HepG2 (cell line): ENCODE measurements at regions of chr6 and their contacts with region 1.

Region 1: GRCh38 chr6:43059168-43060033 is at the starts of genes KLC4 and MRPL2:
- DNase-seq: peak; percentile 99
- ATAC-seq: peak; percentile 82
- H3K4me3 ChIP-seq: peak within 1 kb of the TSS; percentile 74 to 99 (median 93)
- H3K27ac ChIP-seq: peak within 1 kb of the TSS; percentile 91
- H3K4me1 ChIP-seq: peaks cover 37% of the 10 kb centered on the region
- H3K27me3 ChIP-seq: no peaks in the 10 kb centered on the region; a peak in 1 of 5 replicates
- CTCF ChIP-seq: peak; percentile 11; the same call in 1 of the 2 replicates
- EP300 ChIP-seq: peak in 1 of 2 experiments; percentile 18; a peak in 1 of 4 replicates
- POLR2A ChIP-seq: peak in 1 of 2 experiments; percentile 93; a peak in 2 of 4 replicates
- RAD21 ChIP-seq: 0 out of 2 replicates have a peak, but pooled peaks have one; percentile 13
- total RNA-seq, gene KLC4: 45.4 and 45.8 TPM in 2 replicates
- total RNA-seq, gene MRPL2: 56.1 and 56.8 TPM in 2 replicates

Region 2: GRCh38 chr6:42901536-42901957 is 157.9 kb before region 1 on chr6:
- CTCF ChIA-PET with region 1: no interaction called
- POLR2A ChIA-PET with region 1: interaction called, 6 read pairs
- in situ Hi-C with region 1: no loop called
- intact Hi-C with region 1: loop called (anchors 1 kb)
- DNase-seq: peak; percentile 92
- ATAC-seq: peak; percentile 94
- H3K4me3 ChIP-seq: peak overlapping the region; percentile 48 to 71 (median 63)
- H3K27ac ChIP-seq: no peak overlapping the region
- H3K4me1 ChIP-seq: peaks cover 38% of the 10 kb centered on the region
- H3K27me3 ChIP-seq: no peaks in the 10 kb centered on the region
- CTCF ChIP-seq: peak; percentile 98
- EP300 ChIP-seq: 0 out of 4 replicates have a peak, but pooled peaks of 1 of the 2 experiments have one; percentile 16
- POLR2A ChIP-seq: no peak
- RAD21 ChIP-seq: peak; percentile 96

Region 3: DNA sequence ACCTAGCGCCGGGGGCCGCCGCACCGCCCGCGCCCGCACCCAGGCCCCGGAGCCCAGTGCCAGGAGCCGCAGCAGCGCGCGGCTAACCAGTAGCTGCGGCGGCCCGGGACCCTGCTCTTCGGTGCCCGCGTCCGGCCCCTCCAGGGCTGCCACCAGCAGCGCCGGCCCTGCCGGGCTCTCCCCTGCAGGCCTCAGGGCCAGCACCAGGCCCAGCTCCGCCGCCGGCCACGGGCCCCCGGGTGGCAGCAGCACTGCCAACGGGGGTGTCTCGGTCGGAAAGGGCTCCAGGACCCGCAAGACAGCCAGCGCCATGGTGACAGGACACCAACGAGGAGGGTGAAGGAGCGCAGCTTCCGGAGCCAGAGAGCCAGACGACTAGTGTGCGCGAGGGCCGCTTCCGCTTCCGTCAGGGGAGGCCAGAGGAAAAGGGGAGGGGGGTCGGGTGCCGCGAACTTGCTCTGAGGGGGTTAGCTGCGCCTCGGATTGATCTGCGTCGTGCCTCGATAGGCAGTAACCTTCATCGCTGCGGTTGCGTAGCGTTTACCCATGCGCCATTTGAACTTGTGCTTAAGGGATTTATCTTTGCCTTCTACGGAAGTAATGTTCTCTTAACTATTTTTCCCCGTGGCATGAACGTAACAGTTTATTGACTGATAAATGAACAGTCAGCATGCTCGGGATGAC is 80.4 kb before region 1 on chr6 and contains the start of gene PEX6:
- CTCF ChIA-PET with region 1: no interaction called
- POLR2A ChIA-PET with region 1: interaction called, 44 read pairs
- in situ Hi-C with region 1: no loop called
- intact Hi-C with region 1: no loop called
- DNase-seq: peak; percentile 90
- ATAC-seq: peak; percentile 91
- H3K4me3 ChIP-seq: peak within 1 kb of the TSS; percentile 79 to 96 (median 95)
- H3K27ac ChIP-seq: peak within 1 kb of the TSS; percentile 73
- H3K4me1 ChIP-seq: peaks cover 44% of the 10 kb centered on the region
- H3K27me3 ChIP-seq: no peaks in the 10 kb centered on the region; a peak in 1 of 5 replicates
- CTCF ChIP-seq: peak; percentile 33; the same call in 1 of the 2 replicates
- EP300 ChIP-seq: no peak; a peak in 1 of 4 replicates
- POLR2A ChIP-seq: peak; percentile 96
- RAD21 ChIP-seq: 0 out of 2 replicates have a peak, but pooled peaks have one; percentile 17
- total RNA-seq, gene PEX6: 3.6 and 5.1 TPM in 2 replicates

Region 4: GRCh38 chr6:43021270-43022047 is 37.9 kb before region 1 on chr6 and contains the start of gene RRP36:
- CTCF ChIA-PET with region 1: no interaction called
- POLR2A ChIA-PET with region 1: interaction called, 76 read pairs
- in situ Hi-C with region 1: no loop called
- intact Hi-C with region 1: no loop called
- DNase-seq: peak; percentile 74
- ATAC-seq: peak; percentile 96
- H3K4me3 ChIP-seq: peak within 1 kb of the TSS; percentile 100
- H3K27ac ChIP-seq: peak within 1 kb of the TSS; percentile 77
- H3K4me1 ChIP-seq: peaks cover 30% of the 10 kb centered on the region
- H3K27me3 ChIP-seq: peaks cover 0 to 3% of the 10 kb centered on the region in 2 experiments; a peak in 1 of 5 replicates
- CTCF ChIP-seq: 0 out of 2 replicates have a peak, but pooled peaks have one; percentile 10
- EP300 ChIP-seq: no peak
- POLR2A ChIP-seq: peak; percentile 83 to 87
- RAD21 ChIP-seq: peak; percentile 48; the same call in 1 of the 2 replicates
- total RNA-seq, gene RRP36: 144 and 184 TPM in 2 replicates

Region 5: GRCh38 chr6:43075670-43076463 is 16.5 kb after region 1 on chr6 and contains the start of gene PTK7:
- CTCF ChIA-PET with region 1: no interaction called
- POLR2A ChIA-PET with region 1: interaction called, 103 read pairs
- in situ Hi-C with region 1: no loop called
- intact Hi-C with region 1: loop called (anchors 2 kb)
- DNase-seq: peak; percentile 74
- ATAC-seq: peak; percentile 73
- H3K4me3 ChIP-seq: peak within 1 kb of the TSS; percentile 99 to 100 (median 100)
- H3K27ac ChIP-seq: peak within 1 kb of the TSS; percentile 84
- H3K4me1 ChIP-seq: peaks cover 42% of the 10 kb centered on the region
- H3K27me3 ChIP-seq: no peaks in the 10 kb centered on the region; a peak in 1 of 5 replicates
- CTCF ChIP-seq: no peak
- EP300 ChIP-seq: no peak
- POLR2A ChIP-seq: peak in 1 of 2 experiments; percentile 74; a peak in 2 of 4 replicates
- RAD21 ChIP-seq: no peak
- total RNA-seq, gene PTK7: 48.5 and 99.8 TPM in 2 replicates

Region 6: DNA sequence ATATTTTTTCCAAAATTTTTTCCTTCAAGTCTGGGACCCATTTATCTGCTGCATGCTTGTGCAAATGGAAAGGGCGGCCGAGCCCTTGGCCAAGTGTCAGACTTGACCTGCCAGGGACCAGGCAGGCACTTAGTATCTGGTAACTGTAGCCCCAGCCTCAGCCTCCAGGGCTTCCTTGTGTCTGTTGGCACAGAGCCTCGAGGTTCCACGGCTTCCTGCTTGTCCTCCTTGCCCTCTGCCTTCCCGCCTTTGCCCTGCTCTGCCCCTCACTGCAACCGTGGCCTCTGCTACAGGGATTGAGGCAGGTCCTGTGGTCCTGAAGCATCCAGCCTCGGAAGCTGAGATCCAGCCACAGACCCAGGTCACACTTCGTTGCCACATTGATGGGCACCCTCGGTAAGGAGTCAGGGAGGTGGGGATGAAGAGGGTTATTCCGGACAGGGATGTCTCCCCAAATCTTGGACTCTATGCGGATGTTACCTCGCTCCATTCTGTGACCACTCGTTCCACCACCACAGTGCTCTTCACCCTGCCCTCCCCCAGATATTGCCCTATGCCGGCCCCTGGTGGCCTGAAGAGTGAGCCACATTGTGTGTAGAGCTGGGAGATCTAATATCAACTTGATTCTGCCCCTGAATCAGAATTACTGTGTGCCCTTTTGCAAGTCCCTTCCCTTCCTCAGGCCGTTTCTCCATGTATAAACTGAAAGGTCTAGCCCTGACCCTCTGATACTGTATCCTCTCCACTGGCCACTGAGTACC is 70.2 kb after region 1 on chr6:
- CTCF ChIA-PET with region 1: no interaction called
- POLR2A ChIA-PET with region 1: interaction called, 19 read pairs
- in situ Hi-C with region 1: no loop called
- intact Hi-C with region 1: no loop called
- DNase-seq: peak; percentile 52
- ATAC-seq: peak; percentile 79
- H3K4me3 ChIP-seq: no peak overlapping the region
- H3K27ac ChIP-seq: no peak overlapping the region
- H3K4me1 ChIP-seq: peaks cover 30% of the 10 kb centered on the region
- H3K27me3 ChIP-seq: no peaks in the 10 kb centered on the region
- CTCF ChIP-seq: peak; percentile 74
- EP300 ChIP-seq: no peak
- POLR2A ChIP-seq: no peak
- RAD21 ChIP-seq: peak; percentile 83

Region 7: GRCh38 chr6:43334466-43335095 is 275.2 kb after region 1 on chr6:
- CTCF ChIA-PET with region 1: no interaction called
- POLR2A ChIA-PET with region 1: no interaction called
- in situ Hi-C with region 1: no loop called
- intact Hi-C with region 1: no loop called
- DNase-seq: peak; percentile 66
- ATAC-seq: peak; percentile 74
- H3K4me3 ChIP-seq: no peak overlapping the region
- H3K27ac ChIP-seq: no peak overlapping the region
- H3K4me1 ChIP-seq: peaks cover 12% of the 10 kb centered on the region
- H3K27me3 ChIP-seq: no peaks in the 10 kb centered on the region
- CTCF ChIP-seq: peak; percentile 60
- EP300 ChIP-seq: no peak
- POLR2A ChIP-seq: no peak
- RAD21 ChIP-seq: peak; percentile 80